ENCODE measurements at regions of chr1 and their contacts with region 1.

Region 1: GRCh38 chr1:168603501-168604110 is 27.2 kb downstream of the XCL1 start:
- DNase-seq: peak; percentile 45
- ATAC-seq: peak; percentile 93
- H3K4me3 ChIP-seq: no peak overlapping the region
- H3K27ac ChIP-seq: no peak overlapping the region
- H3K4me1 ChIP-seq: no peaks in the 10 kb centered on the region
- H3K27me3 ChIP-seq: no peaks in the 10 kb centered on the region
- CTCF ChIP-seq: peak; percentile 72
- POLR2A ChIP-seq: no peak
- RAD21 ChIP-seq: peak; percentile 88

Region 2: GRCh38 chr1:169086603-169087455 is 483.2 kb after region 1 on chr1:
- CTCF ChIA-PET with region 1: no interaction called
- POLR2A ChIA-PET with region 1: no interaction called
- dilution Hi-C with region 1: no loop called
- in situ Hi-C with region 1: no loop called
- intact Hi-C with region 1: no loop called
- DNase-seq: peak; percentile 37
- ATAC-seq: no peak
- H3K4me3 ChIP-seq: no peak overlapping the region
- H3K27ac ChIP-seq: no peak overlapping the region
- H3K4me1 ChIP-seq: no peaks in the 10 kb centered on the region
- H3K27me3 ChIP-seq: peaks cover 2% of the 10 kb centered on the region; the same call in 1 of the 2 replicates
- CTCF ChIP-seq: no peak
- POLR2A ChIP-seq: no peak
- RAD21 ChIP-seq: no peak

Region 3: GRCh38 chr1:169133801-169134502 is 530.3 kb after region 1 on chr1:
- CTCF ChIA-PET with region 1: no interaction called
- POLR2A ChIA-PET with region 1: no interaction called
- dilution Hi-C with region 1: no loop called
- in situ Hi-C with region 1: no loop called
- intact Hi-C with region 1: loop called (anchors 10 kb)
- DNase-seq: no peak
- ATAC-seq: peak; percentile 24; the same call in 1 of the 2 replicates
- H3K4me3 ChIP-seq: no peak overlapping the region
- H3K27ac ChIP-seq: no peak overlapping the region
- H3K4me1 ChIP-seq: no peaks in the 10 kb centered on the region
- H3K27me3 ChIP-seq: no peaks in the 10 kb centered on the region
- CTCF ChIP-seq: peak; percentile 38
- POLR2A ChIP-seq: no peak
- RAD21 ChIP-seq: peak; percentile 50

Region 4: GRCh38 chr1:169348383-169349036 is 744.9 kb after region 1 on chr1:
- CTCF ChIA-PET with region 1: interaction called, 18 read pairs
- POLR2A ChIA-PET with region 1: no interaction called
- dilution Hi-C with region 1: no loop called
- in situ Hi-C with region 1: loop called (anchors 10 kb)
- intact Hi-C with region 1: loop called (anchors 1 kb)
- DNase-seq: peak; percentile 68
- ATAC-seq: peak; percentile 62; the same call in 1 of the 2 replicates
- H3K4me3 ChIP-seq: no peak overlapping the region
- H3K27ac ChIP-seq: no peak overlapping the region
- H3K4me1 ChIP-seq: no peaks in the 10 kb centered on the region
- H3K27me3 ChIP-seq: no peaks in the 10 kb centered on the region
- CTCF ChIP-seq: peak; percentile 86
- POLR2A ChIP-seq: no peak
- RAD21 ChIP-seq: peak; percentile 90

Region 5: GRCh38 chr1:169460191-169460833 is 856.7 kb after region 1 on chr1:
- CTCF ChIA-PET with region 1: no interaction called
- POLR2A ChIA-PET with region 1: no interaction called
- dilution Hi-C with region 1: no loop called
- in situ Hi-C with region 1: no loop called
- intact Hi-C with region 1: loop called (anchors 5 kb)
- DNase-seq: peak; percentile 28
- ATAC-seq: peak; percentile 37
- H3K4me3 ChIP-seq: peak overlapping the region; percentile 33
- H3K27ac ChIP-seq: no peak overlapping the region
- H3K4me1 ChIP-seq: no peaks in the 10 kb centered on the region
- H3K27me3 ChIP-seq: no peaks in the 10 kb centered on the region
- CTCF ChIP-seq: no peak
- POLR2A ChIP-seq: no peak
- RAD21 ChIP-seq: no peak

Region 6: GRCh38 chr1:169711469-169712281 is 1108.1 kb after region 1 on chr1 and contains the start of gene SELL:
- CTCF ChIA-PET with region 1: no interaction called
- POLR2A ChIA-PET with region 1: no interaction called
- dilution Hi-C with region 1: no loop called
- in situ Hi-C with region 1: no loop called
- intact Hi-C with region 1: loop called (anchors 2 kb)
- DNase-seq: peak; percentile 68
- ATAC-seq: peak; percentile 100
- H3K4me3 ChIP-seq: peak within 1 kb of the TSS; percentile 27; the same call in 1 of the 2 replicates
- H3K27ac ChIP-seq: no peak within 1 kb of the TSS
- H3K4me1 ChIP-seq: no peaks in the 10 kb centered on the region
- H3K27me3 ChIP-seq: no peaks in the 10 kb centered on the region; the same call in 1 of the 2 replicates
- CTCF ChIP-seq: peak; percentile 71
- POLR2A ChIP-seq: no peak
- RAD21 ChIP-seq: peak; percentile 63
- total RNA-seq, gene SELL: not detected in 2 replicates

Region 7: DNA sequence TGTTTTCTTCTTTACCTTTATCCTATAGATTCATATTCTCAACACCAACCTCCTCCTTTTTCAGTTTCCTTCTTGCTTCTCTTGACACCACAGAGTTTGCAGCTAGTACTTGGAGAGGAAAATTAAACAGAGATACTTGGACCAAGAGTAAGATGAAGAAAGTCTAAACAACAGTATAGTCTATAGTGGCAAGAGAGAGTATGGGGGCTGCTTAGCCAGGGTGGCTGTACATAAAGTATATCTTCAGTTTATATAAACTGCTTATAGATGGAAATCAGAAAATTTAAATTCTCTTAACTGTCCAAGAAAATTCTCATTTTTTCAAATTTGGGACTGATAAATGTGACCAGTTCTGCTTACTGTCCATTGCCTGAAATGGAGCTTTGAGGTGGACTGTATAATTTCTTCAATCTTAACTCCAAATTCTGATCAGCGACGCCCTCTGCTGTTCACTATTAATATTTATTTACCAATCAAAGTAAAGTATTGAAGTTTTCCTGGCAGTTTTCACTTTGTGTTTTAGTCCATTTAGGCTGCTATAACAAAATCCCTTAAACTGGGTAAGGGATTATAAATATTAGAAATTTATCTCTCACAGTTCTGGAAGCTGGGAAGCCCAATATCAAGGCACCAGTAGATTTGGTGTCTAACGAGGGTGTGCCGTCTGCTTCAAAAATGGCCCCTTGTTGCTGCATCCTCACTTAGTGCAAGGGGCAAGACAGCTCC is 1205.9 kb after region 1 on chr1:
- CTCF ChIA-PET with region 1: no interaction called
- POLR2A ChIA-PET with region 1: no interaction called
- dilution Hi-C with region 1: no loop called
- in situ Hi-C with region 1: no loop called
- intact Hi-C with region 1: loop called (anchors 10 kb)
- DNase-seq: peak; percentile 35
- ATAC-seq: peak; percentile 86
- H3K4me3 ChIP-seq: no peak overlapping the region
- H3K27ac ChIP-seq: no peak overlapping the region
- H3K4me1 ChIP-seq: no peaks in the 10 kb centered on the region
- H3K27me3 ChIP-seq: no peaks in the 10 kb centered on the region
- CTCF ChIP-seq: peak; percentile 55
- POLR2A ChIP-seq: no peak
- RAD21 ChIP-seq: peak; percentile 50